ENCODE measurements at regions of chr1 and their contacts with region 1.

Region 1: DNA sequence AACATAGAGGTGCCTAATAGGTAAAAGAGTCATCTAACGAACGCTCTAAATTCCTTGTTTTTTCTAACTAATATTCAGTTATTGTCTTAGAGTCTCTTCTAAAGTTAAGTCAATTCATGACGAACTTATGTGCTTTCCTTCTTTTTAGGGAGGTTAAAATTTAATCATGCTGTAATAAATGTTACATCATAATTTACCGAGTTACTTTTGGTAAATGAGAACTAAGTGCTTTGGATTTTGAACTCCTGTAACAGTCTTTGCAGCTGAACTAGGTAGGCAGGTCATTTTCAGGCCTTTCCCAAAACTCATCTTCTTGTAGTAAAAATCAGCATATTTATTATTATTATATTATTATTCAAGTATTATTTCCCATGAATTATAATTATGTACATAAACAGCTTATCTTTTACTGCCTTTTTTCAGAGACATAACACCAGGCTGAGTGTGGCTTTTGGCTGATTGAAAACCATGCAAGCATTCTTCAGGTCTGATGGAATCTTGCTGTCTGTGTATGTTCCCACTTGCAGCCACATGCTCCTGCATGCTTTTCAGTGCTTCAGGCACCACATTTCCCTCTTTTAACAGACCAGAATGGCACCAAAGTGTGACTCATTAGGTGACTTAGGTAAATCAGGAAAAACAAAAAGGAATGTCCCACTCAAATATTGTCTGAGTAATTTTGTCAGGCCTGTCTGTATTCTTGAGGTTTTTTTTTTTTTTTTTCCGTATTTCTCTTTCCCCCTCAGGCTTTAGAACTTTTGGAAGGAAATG is 81.0 kb upstream of the CD55 start:
- DNase-seq: peak; percentile 61 to 97
- H3K4me3 ChIP-seq: peak overlapping the region; percentile 23
- H3K27ac ChIP-seq: peak overlapping the region; percentile 98
- H3K4me1 ChIP-seq: peaks cover 48% of the 10 kb centered on the region
- H3K27me3 ChIP-seq: no peaks in the 10 kb centered on the region
- CTCF ChIP-seq: no peak

Region 2: DNA sequence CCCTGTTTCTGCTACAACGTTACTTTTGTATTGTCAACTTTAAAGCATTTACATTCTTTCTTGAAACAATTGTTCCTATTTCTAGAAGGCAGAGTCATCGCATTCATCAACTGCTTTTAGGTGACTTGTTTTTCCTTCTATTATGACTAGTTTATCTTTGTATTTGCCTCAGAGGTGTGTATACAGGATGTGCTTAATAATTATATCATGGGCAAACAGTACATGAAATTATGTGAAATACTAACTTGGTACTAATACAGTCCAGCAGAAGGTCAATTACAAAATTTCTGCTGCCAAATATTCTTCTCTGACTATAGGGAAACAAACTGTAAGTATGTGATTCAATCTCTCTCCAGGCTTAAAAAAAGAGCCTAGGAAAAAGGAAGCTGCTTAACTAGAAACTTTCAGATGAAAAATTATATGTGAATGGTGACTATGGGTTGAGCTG is 34.9 kb before region 1 on chr1:
- CTCF ChIA-PET with region 1: no interaction called
- POLR2A ChIA-PET with region 1: no interaction called
- intact Hi-C with region 1: loop called (anchors 1 kb)
- DNase-seq: peak in 1 of 2 experiments; percentile 37
- H3K4me3 ChIP-seq: no peak overlapping the region
- H3K27ac ChIP-seq: peak overlapping the region; percentile 85
- H3K4me1 ChIP-seq: peaks cover 19% of the 10 kb centered on the region
- H3K27me3 ChIP-seq: no peaks in the 10 kb centered on the region
- CTCF ChIP-seq: no peak

Region 3: GRCh38 chr1:207282058-207282457 is 41.5 kb after region 1 on chr1:
- CTCF ChIA-PET with region 1: no interaction called
- POLR2A ChIA-PET with region 1: no interaction called
- intact Hi-C with region 1: loop called (anchors 2 kb)
- DNase-seq: peak in 1 of 2 experiments; percentile 66
- H3K4me3 ChIP-seq: no peak overlapping the region
- H3K27ac ChIP-seq: peak overlapping the region; percentile 60
- H3K4me1 ChIP-seq: peaks cover 28% of the 10 kb centered on the region
- H3K27me3 ChIP-seq: no peaks in the 10 kb centered on the region
- CTCF ChIP-seq: no peak